ENCODE measurements at regions of chr1 and their contacts with region 1.

Region 1: GRCh38 chr1:232950197-232951176 is at the start of gene NTPCR:
- DNase-seq: peak; percentile 90
- ATAC-seq: peak; percentile 94
- H3K4me3 ChIP-seq: peak within 1 kb of the TSS; percentile 76
- H3K27ac ChIP-seq: peak within 1 kb of the TSS; percentile 98
- H3K4me1 ChIP-seq: peaks cover 10% of the 10 kb centered on the region
- H3K27me3 ChIP-seq: no peaks in the 10 kb centered on the region
- CTCF ChIP-seq: no peak
- POLR2A ChIP-seq: peak; percentile 28; the same call in 1 of the 2 replicates
- RAD21 ChIP-seq: no peak
- total RNA-seq, gene NTPCR: 13.3 and 16.4 TPM in 2 replicates

Region 2: GRCh38 chr1:232477728-232478127 is 472.8 kb before region 1 on chr1:
- CTCF ChIA-PET with region 1: no interaction called
- POLR2A ChIA-PET with region 1: no interaction called
- dilution Hi-C with region 1: no loop called
- in situ Hi-C with region 1: no loop called
- intact Hi-C with region 1: loop called (anchors 10 kb)
- DNase-seq: peak; percentile 98
- ATAC-seq: peak; percentile 79
- H3K4me3 ChIP-seq: no peak overlapping the region
- H3K27ac ChIP-seq: no peak overlapping the region
- H3K4me1 ChIP-seq: peaks cover 14% of the 10 kb centered on the region
- H3K27me3 ChIP-seq: no peaks in the 10 kb centered on the region
- CTCF ChIP-seq: no peak
- POLR2A ChIP-seq: no peak
- RAD21 ChIP-seq: no peak

Region 3: GRCh38 chr1:232853994-232854797 is 96.3 kb before region 1 on chr1:
- CTCF ChIA-PET with region 1: no interaction called
- POLR2A ChIA-PET with region 1: no interaction called
- dilution Hi-C with region 1: loop called (anchors 25 kb)
- in situ Hi-C with region 1: no loop called
- intact Hi-C with region 1: loop called (anchors 5 kb)
- DNase-seq: peak; percentile 83
- ATAC-seq: peak; percentile 75
- H3K4me3 ChIP-seq: no peak overlapping the region
- H3K27ac ChIP-seq: peak overlapping the region; percentile 21; the same call in 1 of the 2 replicates
- H3K4me1 ChIP-seq: peaks cover 3% of the 10 kb centered on the region; the same call in 1 of the 2 replicates
- H3K27me3 ChIP-seq: no peaks in the 10 kb centered on the region
- CTCF ChIP-seq: no peak
- POLR2A ChIP-seq: no peak
- RAD21 ChIP-seq: no peak

Region 4: GRCh38 chr1:233224311-233224710 is 273.8 kb after region 1 on chr1:
- CTCF ChIA-PET with region 1: no interaction called
- POLR2A ChIA-PET with region 1: interaction called, 14 read pairs
- dilution Hi-C with region 1: no loop called
- in situ Hi-C with region 1: no loop called
- intact Hi-C with region 1: no loop called
- DNase-seq: peak; percentile 19
- ATAC-seq: peak; percentile 68
- H3K4me3 ChIP-seq: no peak overlapping the region
- H3K27ac ChIP-seq: no peak overlapping the region
- H3K4me1 ChIP-seq: peaks cover 4% of the 10 kb centered on the region
- H3K27me3 ChIP-seq: no peaks in the 10 kb centered on the region
- CTCF ChIP-seq: no peak
- POLR2A ChIP-seq: no peak
- RAD21 ChIP-seq: no peak

Region 5: GRCh38 chr1:233240829-233241682 is 290.6 kb after region 1 on chr1:
- CTCF ChIA-PET with region 1: no interaction called
- POLR2A ChIA-PET with region 1: no interaction called
- dilution Hi-C with region 1: no loop called
- in situ Hi-C with region 1: no loop called
- intact Hi-C with region 1: loop called (anchors 10 kb)
- DNase-seq: peak; percentile 42
- ATAC-seq: peak; percentile 71
- H3K4me3 ChIP-seq: no peak overlapping the region
- H3K27ac ChIP-seq: no peak overlapping the region
- H3K4me1 ChIP-seq: peaks cover 4% of the 10 kb centered on the region; the same call in 1 of the 2 replicates
- H3K27me3 ChIP-seq: no peaks in the 10 kb centered on the region
- CTCF ChIP-seq: peak; percentile 76
- POLR2A ChIP-seq: no peak
- RAD21 ChIP-seq: peak; percentile 92